ENCODE measurements at regions of chr16 and their contacts with region 1.

Region 1: DNA sequence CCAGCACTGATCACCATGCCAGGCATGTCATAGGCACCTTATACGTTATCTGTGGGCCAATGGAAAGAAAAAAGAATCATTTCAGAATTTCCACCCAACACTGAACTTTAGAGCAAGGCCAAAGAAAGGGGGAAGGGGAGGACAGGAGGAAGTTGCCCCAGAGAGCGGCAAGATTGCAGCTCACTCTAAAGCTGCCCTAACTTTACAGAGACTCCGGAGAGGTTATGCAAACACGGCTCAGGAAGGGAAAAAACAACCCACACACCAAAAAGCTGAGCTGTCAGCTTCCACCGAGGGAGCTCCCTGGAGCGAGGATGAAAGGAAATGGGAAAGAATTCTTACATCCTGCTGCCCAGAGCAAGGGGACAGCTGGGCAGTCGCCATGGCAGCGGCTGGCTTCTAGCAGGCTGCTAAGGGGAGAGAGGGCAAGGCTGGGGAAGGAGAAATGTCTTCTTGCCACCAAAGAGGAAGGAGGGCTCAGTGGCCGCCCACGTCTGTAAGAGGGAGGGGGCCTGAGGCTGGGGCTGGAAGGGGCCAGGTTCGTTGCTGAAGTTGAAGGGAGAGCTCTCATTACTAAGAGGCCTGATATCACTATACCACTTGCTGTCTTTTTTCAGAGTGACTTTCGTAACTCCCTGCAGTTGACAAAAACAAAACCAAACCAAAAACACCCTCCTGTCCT is 18.2 kb downstream of the COTL1 start:
- H3K4me3 Mint-ChIP-seq: peak overlapping the region; percentile 78
- H3K27ac Mint-ChIP-seq: peak overlapping the region; percentile 94
- H3K4me1 Mint-ChIP-seq: peaks cover 90% of the 10 kb centered on the region
- H3K27me3 Mint-ChIP-seq: no peaks in the 10 kb centered on the region

Region 2: GRCh38 chr16:84585886-84586285 is 13.8 kb before region 1 on chr16:
- intact Hi-C with region 1: loop called (anchors 2 kb)
- H3K4me3 Mint-ChIP-seq: peak overlapping the region; percentile 59
- H3K27ac Mint-ChIP-seq: peak overlapping the region; percentile 85
- H3K4me1 Mint-ChIP-seq: peaks cover 69% of the 10 kb centered on the region
- H3K27me3 Mint-ChIP-seq: no peaks in the 10 kb centered on the region

Measured in dendritic cell treated with granulocyte-macrophage colony-stimulating factor and Interleukin-4, amounts not matched to agents 40 ng/mL and 50 ng/mL, for 4 days (primary cell).